PC-3 (cell line): ENCODE measurements at regions of chr17 and their contacts with region 1.

Region 1: GRCh38 chr17:79093270-79093669 is 18.6 kb downstream of the ENGASE start:
- DNase-seq: peak; percentile 15
- ATAC-seq: no peak
- H3K4me3 ChIP-seq: no peak overlapping the region
- H3K27ac ChIP-seq: no peak overlapping the region
- H3K4me1 ChIP-seq: no peaks in the 10 kb centered on the region
- H3K27me3 ChIP-seq: peaks cover 15% of the 10 kb centered on the region
- CTCF ChIP-seq: no peak

Region 2: GRCh38 chr17:78817123-78817522 is 276.1 kb before region 1 on chr17:
- CTCF ChIA-PET with region 1: no interaction called
- POLR2A ChIA-PET with region 1: no interaction called
- intact Hi-C with region 1: no loop called
- DNase-seq: no peak
- ATAC-seq: no peak
- H3K4me3 ChIP-seq: no peak overlapping the region
- H3K27ac ChIP-seq: no peak overlapping the region
- H3K4me1 ChIP-seq: no peaks in the 10 kb centered on the region
- H3K27me3 ChIP-seq: no peaks in the 10 kb centered on the region
- CTCF ChIP-seq: no peak

Region 3: GRCh38 chr17:79027925-79028813 is 65.1 kb before region 1 on chr17:
- CTCF ChIA-PET with region 1: no interaction called
- POLR2A ChIA-PET with region 1: no interaction called
- intact Hi-C with region 1: no loop called
- DNase-seq: no peak
- ATAC-seq: no peak
- H3K4me3 ChIP-seq: no peak overlapping the region
- H3K27ac ChIP-seq: no peak overlapping the region
- H3K4me1 ChIP-seq: peaks cover 45% of the 10 kb centered on the region
- H3K27me3 ChIP-seq: no peaks in the 10 kb centered on the region
- CTCF ChIP-seq: peak; percentile 59

Region 4: DNA sequence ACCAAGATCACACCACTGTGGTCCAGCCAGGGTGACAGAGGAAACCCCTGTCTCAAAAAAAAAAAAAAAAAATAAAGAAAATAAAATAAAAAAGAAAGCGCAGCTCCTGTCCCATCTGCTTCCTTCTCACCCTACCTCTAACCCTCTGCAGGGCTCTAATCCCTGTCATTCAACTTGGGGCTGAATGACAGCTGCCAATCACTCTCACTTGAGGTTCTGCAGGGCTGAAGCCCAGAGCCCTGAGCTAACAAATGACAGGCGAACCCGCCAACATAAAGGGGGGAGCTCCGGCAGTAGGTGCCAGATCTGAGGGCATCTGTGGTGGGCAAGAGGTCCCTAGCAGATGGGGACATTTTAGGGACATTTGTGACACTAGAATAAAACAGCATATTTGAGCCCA is 25.7 kb after region 1 on chr17:
- CTCF ChIA-PET with region 1: interaction called, 10 read pairs
- POLR2A ChIA-PET with region 1: interaction called, 5 read pairs
- intact Hi-C with region 1: no loop called
- DNase-seq: no peak
- ATAC-seq: no peak
- H3K4me3 ChIP-seq: no peak overlapping the region
- H3K27ac ChIP-seq: no peak overlapping the region
- H3K4me1 ChIP-seq: peaks cover 13% of the 10 kb centered on the region
- H3K27me3 ChIP-seq: peaks cover 91% of the 10 kb centered on the region
- CTCF ChIP-seq: no peak

Region 5: GRCh38 chr17:79691931-79692330 is 598.7 kb after region 1 on chr17:
- CTCF ChIA-PET with region 1: interaction called, 11 read pairs
- POLR2A ChIA-PET with region 1: no interaction called
- intact Hi-C with region 1: no loop called
- DNase-seq: no peak
- ATAC-seq: no peak
- H3K4me3 ChIP-seq: no peak overlapping the region
- H3K27ac ChIP-seq: no peak overlapping the region
- H3K4me1 ChIP-seq: no peaks in the 10 kb centered on the region
- H3K27me3 ChIP-seq: peaks cover 78% of the 10 kb centered on the region
- CTCF ChIP-seq: no peak